BJ (cell line): ENCODE measurements at regions of chr1 and their contacts with region 1.

Region 1: DNA sequence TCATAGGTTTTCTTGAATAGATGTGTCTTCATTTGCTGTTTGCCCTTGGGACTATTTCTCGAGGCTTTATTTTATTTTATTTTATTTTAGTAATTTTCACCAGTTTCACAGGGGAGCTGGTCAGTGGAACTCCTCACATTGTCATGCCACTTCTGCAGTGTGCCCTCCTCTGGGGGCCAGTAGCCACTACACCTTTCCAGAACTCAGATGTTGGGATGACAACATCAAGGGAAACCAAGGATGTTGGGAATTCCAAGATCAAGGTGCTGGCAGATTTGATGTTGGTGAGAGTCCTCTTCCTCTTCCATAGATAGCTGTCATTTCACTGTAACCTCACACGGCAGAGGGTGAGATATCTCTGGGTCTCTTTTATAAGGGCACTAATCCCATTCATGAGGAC is 35.5 kb downstream of the SLC26A9 start:
- DNase-seq: no peak
- H3K4me3 ChIP-seq: no peak overlapping the region
- H3K27me3 ChIP-seq: no peaks in the 10 kb centered on the region
- CTCF ChIP-seq: peak; percentile 76

Region 2: GRCh38 chr1:205896320-205896719 is 11.5 kb before region 1 on chr1:
- CTCF ChIA-PET with region 1: interaction called, 11 read pairs
- POLR2A ChIA-PET with region 1: no interaction called
- DNase-seq: no peak
- H3K4me3 ChIP-seq: no peak overlapping the region
- H3K27me3 ChIP-seq: no peaks in the 10 kb centered on the region
- CTCF ChIP-seq: no peak